ENCODE measurements at regions of chr20 and their contacts with region 1.

Region 1: GRCh38 chr20:774016-774659 is 5.8 kb upstream of the SLC52A3 start:
- DNase-seq: no peak
- ATAC-seq: no peak
- H3K4me3 Mint-ChIP-seq: no peak overlapping the region
- H3K27ac Mint-ChIP-seq: no peak overlapping the region
- H3K4me1 Mint-ChIP-seq: no peaks in the 10 kb centered on the region
- H3K27me3 Mint-ChIP-seq: peaks cover 10% of the 10 kb centered on the region

Region 2: GRCh38 chr20:760751-761417 is 13.3 kb before region 1 on chr20:
- CTCF ChIA-PET with region 1: interaction called, 13 read pairs
- DNase-seq: peak; percentile 48
- ATAC-seq: peak; percentile 58
- H3K4me3 Mint-ChIP-seq: no peak overlapping the region
- H3K27ac Mint-ChIP-seq: no peak overlapping the region
- H3K4me1 Mint-ChIP-seq: no peaks in the 10 kb centered on the region
- H3K27me3 Mint-ChIP-seq: peaks cover 12% of the 10 kb centered on the region

Measured in activated CD8-positive, alpha-beta memory T cell treated with anti-CD3 and anti-CD28 coated beads, Interleukin-2, amount 10 ng/mL, durations not matched to agents 7 days and 5 days (primary cell).